ENCODE measurements at regions of chr17 and their contacts with region 1.

Region 1: GRCh38 chr17:38485146-38485468 is 56.8 kb downstream of the ARHGAP23 start:
- DNase-seq: no peak
- ATAC-seq: no peak
- H3K4me3 Mint-ChIP-seq: no peak overlapping the region
- H3K27ac Mint-ChIP-seq: no peak overlapping the region
- H3K4me1 Mint-ChIP-seq: peaks cover 8% of the 10 kb centered on the region
- H3K27me3 Mint-ChIP-seq: no peaks in the 10 kb centered on the region

Region 2: GRCh38 chr17:38421171-38421841 is 63.8 kb before region 1 on chr17:
- CTCF ChIA-PET with region 1: interaction called, 6 read pairs
- POLR2A ChIA-PET with region 1: no interaction called
- intact Hi-C with region 1: loop called (anchors 1 to 5 kb)
- DNase-seq: no peak
- ATAC-seq: no peak
- H3K4me3 Mint-ChIP-seq: no peak overlapping the region
- H3K27ac Mint-ChIP-seq: no peak overlapping the region
- H3K4me1 Mint-ChIP-seq: peaks cover 3% of the 10 kb centered on the region
- H3K27me3 Mint-ChIP-seq: peaks cover 46% of the 10 kb centered on the region

Region 3: GRCh38 chr17:38428112-38428642 is 56.9 kb before region 1 on chr17 and contains the start of gene ARHGAP23:
- CTCF ChIA-PET with region 1: interaction called, 6 read pairs
- POLR2A ChIA-PET with region 1: no interaction called
- intact Hi-C with region 1: loop called (anchors 1 to 5 kb)
- DNase-seq: peak; percentile 59
- ATAC-seq: peak; percentile 45
- H3K4me3 Mint-ChIP-seq: peak within 1 kb of the TSS; percentile 69
- H3K27ac Mint-ChIP-seq: no peak within 1 kb of the TSS
- H3K4me1 Mint-ChIP-seq: peaks cover 9% of the 10 kb centered on the region
- H3K27me3 Mint-ChIP-seq: peaks cover 14% of the 10 kb centered on the region
- total RNA-seq, gene ARHGAP23: 0.55 to 0.86 TPM

Region 4: DNA sequence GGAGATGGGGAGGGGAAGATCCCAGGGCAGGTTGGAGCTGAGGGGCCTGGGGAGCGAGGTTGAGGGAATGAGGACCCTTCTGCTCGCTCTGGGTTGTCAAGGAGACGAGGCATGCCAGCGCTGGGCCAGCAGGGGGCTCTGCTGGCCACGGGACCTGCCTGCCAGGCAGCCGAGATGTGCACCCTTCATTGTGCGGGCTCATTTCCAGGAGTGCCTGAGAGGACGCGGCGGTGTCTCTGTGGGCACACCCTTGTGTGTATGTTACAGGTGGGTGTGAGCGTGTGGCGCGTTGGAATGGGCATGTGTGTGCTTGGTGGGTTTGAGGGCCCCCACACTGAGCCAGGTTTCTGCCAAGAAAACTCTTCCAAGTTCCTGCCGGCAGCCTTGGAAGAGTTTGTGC is 41.0 kb before region 1 on chr17:
- CTCF ChIA-PET with region 1: no interaction called
- POLR2A ChIA-PET with region 1: interaction called, 5 read pairs
- intact Hi-C with region 1: loop called (anchors 1 to 5 kb)
- DNase-seq: peak; percentile 81
- ATAC-seq: peak; percentile 93
- H3K4me3 Mint-ChIP-seq: no peak overlapping the region
- H3K27ac Mint-ChIP-seq: no peak overlapping the region
- H3K4me1 Mint-ChIP-seq: peaks cover 6% of the 10 kb centered on the region
- H3K27me3 Mint-ChIP-seq: peaks cover 3% of the 10 kb centered on the region

Region 5: GRCh38 chr17:38498186-38498752 is 13.2 kb after region 1 on chr17:
- CTCF ChIA-PET with region 1: no interaction called
- POLR2A ChIA-PET with region 1: no interaction called
- intact Hi-C with region 1: no loop called
- DNase-seq: no peak
- ATAC-seq: no peak
- H3K4me3 Mint-ChIP-seq: no peak overlapping the region
- H3K27ac Mint-ChIP-seq: no peak overlapping the region
- H3K4me1 Mint-ChIP-seq: no peaks in the 10 kb centered on the region
- H3K27me3 Mint-ChIP-seq: no peaks in the 10 kb centered on the region

Region 6: GRCh38 chr17:38512473-38513058 is 27.5 kb after region 1 on chr17:
- CTCF ChIA-PET with region 1: no interaction called
- POLR2A ChIA-PET with region 1: no interaction called
- intact Hi-C with region 1: no loop called
- DNase-seq: no peak
- ATAC-seq: no peak
- H3K4me3 Mint-ChIP-seq: no peak overlapping the region
- H3K27ac Mint-ChIP-seq: no peak overlapping the region
- H3K4me1 Mint-ChIP-seq: peaks cover 7% of the 10 kb centered on the region
- H3K27me3 Mint-ChIP-seq: peaks cover 30% of the 10 kb centered on the region

Region 7: DNA sequence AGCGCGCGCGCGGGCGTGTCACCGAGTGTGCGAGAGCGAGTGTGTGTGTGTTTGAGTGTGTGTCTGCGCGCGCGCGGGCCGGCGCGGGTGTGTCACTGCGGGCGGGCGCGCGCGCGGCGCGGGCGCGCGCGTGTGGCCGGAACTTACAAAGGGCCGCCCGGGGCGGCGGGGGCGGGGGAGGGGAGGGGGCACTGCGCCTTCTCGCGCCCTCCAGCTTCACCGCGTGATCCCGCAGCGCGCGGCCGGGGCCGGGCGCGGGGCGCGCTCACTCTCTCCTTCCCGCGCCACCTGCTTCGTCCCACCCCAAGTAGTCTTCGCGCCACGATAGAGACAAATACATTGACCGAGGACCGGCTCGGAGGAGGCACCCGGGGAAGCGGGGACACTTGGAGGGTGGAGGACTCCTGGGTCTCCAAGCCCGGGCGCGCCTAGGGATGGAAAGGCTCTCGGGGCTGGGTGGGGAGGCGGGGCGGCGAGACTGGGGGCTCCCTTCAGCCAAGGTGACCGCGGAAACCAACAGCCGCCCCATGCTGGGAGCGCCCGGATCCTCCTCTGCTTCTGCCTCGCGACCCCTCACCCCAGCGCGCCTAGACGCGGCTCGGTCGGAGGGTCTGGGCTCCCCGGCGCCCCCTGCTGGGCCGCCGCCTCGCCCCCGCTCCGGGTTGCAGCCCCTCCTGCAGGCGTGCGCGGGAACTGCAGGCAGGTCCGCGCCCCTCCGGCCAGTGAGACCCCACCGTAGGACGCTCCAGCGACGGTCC is 121.0 kb after region 1 on chr17 and contains the start of gene SRCIN1:
- CTCF ChIA-PET with region 1: no interaction called
- POLR2A ChIA-PET with region 1: no interaction called
- intact Hi-C with region 1: loop called in 1 of 2 experiments (anchors 5 kb)
- DNase-seq: peak; percentile 79
- ATAC-seq: peak; percentile 42
- H3K4me3 Mint-ChIP-seq: peak within 1 kb of the TSS; percentile 66
- H3K27ac Mint-ChIP-seq: no peak within 1 kb of the TSS
- H3K4me1 Mint-ChIP-seq: peaks cover 16% of the 10 kb centered on the region
- H3K27me3 Mint-ChIP-seq: peaks cover 56% of the 10 kb centered on the region
- total RNA-seq, gene SRCIN1: 0.72 to 0.73 TPM

Region 8: GRCh38 chr17:38735161-38735997 is 250.3 kb after region 1 on chr17:
- CTCF ChIA-PET with region 1: no interaction called
- POLR2A ChIA-PET with region 1: no interaction called
- intact Hi-C with region 1: loop called in 1 of 2 experiments (anchors 5 kb)
- DNase-seq: peak; percentile 85
- ATAC-seq: peak; percentile 21
- H3K4me3 Mint-ChIP-seq: no peak overlapping the region
- H3K27ac Mint-ChIP-seq: no peak overlapping the region
- H3K4me1 Mint-ChIP-seq: peaks cover 45% of the 10 kb centered on the region
- H3K27me3 Mint-ChIP-seq: no peaks in the 10 kb centered on the region

Measured in activated CD4-positive, alpha-beta T cell treated with anti-CD3 and anti-CD28 coated beads for 36 hours (primary cell).